BJ (cell line): ENCODE measurements at regions of chr1 and their contacts with region 1.

Region 1: GRCh38 chr1:211133836-211134669 is at the start of gene KCNH1:
- DNase-seq: peak; percentile 26
- H3K4me3 ChIP-seq: peak within 1 kb of the TSS; percentile 64
- H3K27me3 ChIP-seq: peaks cover 3% of the 10 kb centered on the region
- CTCF ChIP-seq: peak; percentile 82
- polyA plus RNA-seq, gene KCNH1: 3.5 and 5.8 TPM in 2 replicates

Region 2: DNA sequence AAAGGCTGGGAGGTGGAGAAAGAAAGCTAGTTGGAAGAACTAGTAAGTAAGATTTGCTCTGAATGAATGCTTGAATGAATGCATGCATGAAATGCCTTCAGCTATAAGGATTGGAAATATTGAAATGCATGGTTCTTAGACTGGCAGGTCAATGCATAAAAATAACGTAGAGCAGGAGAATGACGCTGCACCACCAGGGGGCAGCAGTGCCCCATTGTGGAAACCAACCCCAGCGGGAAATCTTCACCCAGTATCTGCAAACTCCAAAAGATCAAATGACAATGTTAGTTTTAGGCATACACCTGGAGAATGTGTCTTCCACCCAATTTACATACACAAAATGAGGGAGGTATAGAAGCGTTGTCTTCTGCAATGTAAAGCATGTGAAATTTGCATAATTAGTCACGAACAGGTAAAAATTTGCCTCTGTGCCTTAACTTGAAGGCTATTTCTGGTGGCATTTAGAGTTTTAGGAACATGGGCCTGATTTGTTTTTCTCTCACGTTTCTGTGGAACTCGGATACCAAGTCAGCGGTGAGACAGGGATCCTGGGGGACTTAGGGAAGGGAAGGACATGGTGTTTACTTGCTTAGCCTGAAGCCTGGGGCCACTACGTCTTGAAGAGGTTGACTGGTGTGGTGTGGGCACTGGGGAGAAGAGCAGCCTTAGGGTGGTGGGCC is 726.7 kb before region 1 on chr1:
- CTCF ChIA-PET with region 1: interaction called, 227 read pairs
- POLR2A ChIA-PET with region 1: no interaction called
- DNase-seq: no peak
- H3K4me3 ChIP-seq: no peak overlapping the region
- H3K27me3 ChIP-seq: no peaks in the 10 kb centered on the region; the same call in 1 of the 2 replicates
- CTCF ChIP-seq: peak; percentile 96

Region 3: GRCh38 chr1:210438928-210439809 is 694.9 kb before region 1 on chr1:
- CTCF ChIA-PET with region 1: interaction called, 25 read pairs
- POLR2A ChIA-PET with region 1: no interaction called
- DNase-seq: peak; percentile 100
- H3K4me3 ChIP-seq: no peak overlapping the region
- H3K27me3 ChIP-seq: no peaks in the 10 kb centered on the region
- CTCF ChIP-seq: no peak

Region 4: DNA sequence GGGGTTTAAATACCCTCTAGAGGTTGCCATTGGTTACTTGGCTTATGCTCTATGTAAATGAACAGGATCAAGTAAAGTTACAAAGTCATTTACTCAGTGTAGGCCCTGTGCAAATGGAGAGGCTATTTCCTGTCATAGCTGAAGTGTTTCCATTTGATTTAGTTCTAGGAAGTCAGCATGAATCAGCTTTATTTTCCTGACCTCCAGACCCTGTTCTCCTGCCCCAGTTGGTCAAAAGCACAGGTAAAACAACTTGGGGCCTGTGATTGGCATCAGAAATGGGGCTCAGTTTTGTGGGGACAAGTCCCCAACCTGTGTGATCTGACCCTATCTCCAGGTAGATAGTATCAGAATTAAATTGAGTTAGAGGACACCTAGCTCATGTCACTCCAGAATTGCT is 565.4 kb before region 1 on chr1:
- CTCF ChIA-PET with region 1: interaction called, 20 read pairs
- POLR2A ChIA-PET with region 1: no interaction called
- DNase-seq: no peak
- H3K4me3 ChIP-seq: no peak overlapping the region
- H3K27me3 ChIP-seq: no peaks in the 10 kb centered on the region
- CTCF ChIP-seq: no peak

Region 5: GRCh38 chr1:210597555-210598134 is 536.4 kb before region 1 on chr1:
- CTCF ChIA-PET with region 1: interaction called, 20 read pairs
- POLR2A ChIA-PET with region 1: interaction called, 8 read pairs
- DNase-seq: peak; percentile 81
- H3K4me3 ChIP-seq: no peak overlapping the region
- H3K27me3 ChIP-seq: no peaks in the 10 kb centered on the region
- CTCF ChIP-seq: no peak